ENCODE measurements at regions of chr20 and their contacts with region 1.

Region 1: GRCh38 chr20:57008217-57008616 is 258.2 kb downstream of the BMP7 start:
- DNase-seq: no peak
- H3K4me3 ChIP-seq: no peak overlapping the region
- H3K27ac ChIP-seq: no peak overlapping the region
- H3K4me1 ChIP-seq: peaks cover 0 to 7% (median 0%) of the 10 kb centered on the region in 4 donors
- H3K27me3 ChIP-seq: peaks cover 0 to 30% of the 10 kb centered on the region in 2 donors
- CTCF ChIP-seq: no peak

Region 2: GRCh38 chr20:56957737-56958553 is 50.3 kb before region 1 on chr20:
- intact Hi-C with region 1: no loop called
- DNase-seq: no peak
- H3K4me3 ChIP-seq: no peak overlapping the region
- H3K27ac ChIP-seq: no peak overlapping the region
- H3K4me1 ChIP-seq: no peaks in the 10 kb centered on the region
- H3K27me3 ChIP-seq: peaks cover 0 to 36% of the 10 kb centered on the region in 2 donors
- CTCF ChIP-seq: no peak

Region 3: GRCh38 chr20:57047281-57048026 is 39.2 kb after region 1 on chr20:
- intact Hi-C with region 1: loop called (anchors 2 kb)
- DNase-seq: peak in 1 of 2 donors; percentile 2
- H3K4me3 ChIP-seq: no peak overlapping the region
- H3K27ac ChIP-seq: no peak overlapping the region
- H3K4me1 ChIP-seq: peaks cover 0 to 12% (median 0%) of the 10 kb centered on the region in 4 donors
- H3K27me3 ChIP-seq: peaks cover 0 to 25% of the 10 kb centered on the region in 2 donors
- CTCF ChIP-seq: no peak

Region 4: DNA sequence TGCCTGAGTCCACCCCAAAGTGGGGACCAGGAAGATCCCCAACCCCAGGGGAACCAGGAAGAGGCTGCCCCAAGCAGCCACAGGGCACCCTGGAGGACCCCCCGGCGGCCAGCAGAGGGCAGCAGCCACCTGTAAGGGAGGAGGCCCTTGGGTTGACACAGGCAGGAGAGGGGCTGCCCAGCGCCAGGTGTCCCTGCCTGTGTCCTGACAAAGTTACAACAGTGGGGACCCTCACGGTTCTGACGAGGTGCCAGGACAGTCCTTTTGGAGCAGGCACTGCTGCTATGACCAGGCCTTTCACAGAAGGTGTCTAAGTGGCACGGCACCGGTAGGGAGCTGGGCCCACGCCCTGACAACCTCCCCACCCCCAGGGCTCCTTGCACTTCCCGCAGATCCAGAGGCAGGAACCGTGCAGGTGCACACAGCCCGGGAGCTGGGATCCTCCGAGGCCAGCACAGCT is 81.5 kb after region 1 on chr20:
- intact Hi-C with region 1: no loop called
- DNase-seq: no peak
- H3K4me3 ChIP-seq: no peak overlapping the region
- H3K27ac ChIP-seq: no peak overlapping the region
- H3K4me1 ChIP-seq: peaks cover 0 to 12% (median 0%) of the 10 kb centered on the region in 4 donors
- H3K27me3 ChIP-seq: peaks cover 0 to 46% of the 10 kb centered on the region in 2 donors
- CTCF ChIP-seq: peak; percentile 40 to 49

Region 5: DNA sequence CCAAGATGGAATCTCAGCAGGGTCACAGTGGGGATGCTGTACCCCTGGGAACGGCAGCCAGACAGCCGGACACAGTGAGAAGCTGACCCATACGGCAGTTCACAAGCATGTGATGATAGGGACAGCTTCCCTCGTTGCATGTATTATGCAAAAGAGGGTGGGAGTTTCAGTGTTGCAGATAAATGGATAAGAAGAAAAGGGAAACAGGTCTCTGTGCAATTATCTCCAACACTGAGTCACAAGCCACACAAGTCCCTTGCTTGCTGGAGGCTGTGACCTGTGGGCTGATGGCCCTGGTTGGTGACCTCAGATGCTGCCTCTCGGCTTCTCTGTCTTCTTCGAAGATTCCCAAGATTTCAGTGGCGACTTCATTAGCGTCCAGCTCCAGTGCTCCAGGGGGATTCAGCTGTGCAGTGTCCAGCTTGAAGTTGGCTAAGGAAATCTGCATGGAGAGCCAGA is 300.6 kb after region 1 on chr20:
- intact Hi-C with region 1: no loop called
- DNase-seq: peak in 1 of 2 donors; percentile 27
- H3K4me3 ChIP-seq: no peak overlapping the region
- H3K27ac ChIP-seq: no peak overlapping the region
- H3K4me1 ChIP-seq: no peaks in the 10 kb centered on the region
- H3K27me3 ChIP-seq: peaks cover 0 to 29% of the 10 kb centered on the region in 2 donors
- CTCF ChIP-seq: no peak